ENCODE measurements at regions of chr15 and their contacts with region 1.

Region 1: DNA sequence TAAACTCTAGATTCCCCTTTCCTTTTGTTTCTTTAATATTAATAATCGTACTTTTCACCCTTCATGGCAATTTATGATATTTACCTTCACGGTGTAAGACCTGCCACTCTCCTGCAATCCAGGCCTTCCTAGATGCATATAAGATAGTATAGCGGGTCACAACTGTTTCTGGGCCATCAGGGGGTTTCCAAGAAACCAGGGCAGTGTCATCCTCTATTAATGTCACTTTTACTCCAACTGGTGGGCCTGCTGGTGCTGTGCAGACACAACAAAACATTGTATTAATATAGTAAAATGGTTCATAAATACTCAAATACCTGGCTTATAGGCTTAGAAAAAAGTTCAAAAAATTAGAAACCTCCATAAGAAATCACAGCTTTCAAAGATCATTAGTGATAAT is 48.9 kb upstream of the PYGO1 start:
- DNase-seq: no peak
- H3K4me3 ChIP-seq: no peak overlapping the region
- H3K27ac ChIP-seq: no peak overlapping the region
- H3K4me1 ChIP-seq: no peaks in the 10 kb centered on the region
- CTCF ChIP-seq: no peak

Region 2: DNA sequence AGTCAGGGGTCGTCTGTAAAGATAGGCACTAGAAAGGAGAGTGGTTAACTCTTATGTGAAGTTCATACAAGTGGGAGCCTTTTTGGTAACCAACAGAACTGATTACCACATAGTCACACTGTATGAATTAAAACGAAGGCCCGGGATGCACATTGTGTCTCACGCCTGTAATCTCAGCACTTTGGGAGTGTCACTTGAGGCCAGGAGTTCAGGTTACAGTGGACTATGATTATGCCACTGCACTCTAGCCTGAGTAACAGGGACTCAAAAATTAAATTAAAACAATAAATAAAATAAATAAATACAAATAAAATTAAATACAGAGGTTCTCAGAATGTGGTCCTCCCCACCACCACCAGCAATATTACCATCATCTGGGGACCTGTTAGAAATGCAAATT is 129.5 kb before region 1 on chr15:
- CTCF ChIA-PET with region 1: no interaction called
- POLR2A ChIA-PET with region 1: no interaction called
- intact Hi-C with region 1: no loop called
- DNase-seq: no peak
- H3K4me3 ChIP-seq: no peak overlapping the region
- H3K27ac ChIP-seq: no peak overlapping the region
- H3K4me1 ChIP-seq: no peaks in the 10 kb centered on the region
- CTCF ChIP-seq: no peak

Region 3: DNA sequence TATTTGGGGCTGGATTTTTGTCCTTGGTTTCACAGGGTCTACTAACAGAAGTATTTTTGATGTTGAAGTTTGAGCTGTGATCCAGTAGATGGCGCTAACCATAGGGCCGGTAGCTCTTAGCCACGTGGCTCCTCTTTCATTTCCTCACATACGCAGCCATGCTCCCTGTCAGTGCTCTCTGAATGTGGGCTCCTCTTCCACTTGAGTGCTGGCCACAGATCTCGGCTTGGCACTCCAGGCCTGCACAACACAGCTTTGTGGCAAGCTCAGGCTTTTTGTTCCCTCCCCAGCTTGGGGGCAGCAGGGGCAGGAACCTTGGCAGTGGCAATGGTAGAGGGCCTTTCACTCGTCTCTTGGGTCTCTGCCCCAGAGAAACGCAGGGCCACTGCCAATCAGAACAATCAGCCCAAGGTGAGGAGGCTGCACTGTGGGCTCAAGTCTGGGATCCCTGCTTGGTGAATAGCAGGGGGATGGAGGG is 110.5 kb before region 1 on chr15:
- CTCF ChIA-PET with region 1: no interaction called
- POLR2A ChIA-PET with region 1: no interaction called
- intact Hi-C with region 1: loop called (anchors 1 kb)
- DNase-seq: peak; percentile 75
- H3K4me3 ChIP-seq: no peak overlapping the region
- H3K27ac ChIP-seq: no peak overlapping the region
- H3K4me1 ChIP-seq: peaks cover 29% of the 10 kb centered on the region
- CTCF ChIP-seq: peak; percentile 86

Region 4: DNA sequence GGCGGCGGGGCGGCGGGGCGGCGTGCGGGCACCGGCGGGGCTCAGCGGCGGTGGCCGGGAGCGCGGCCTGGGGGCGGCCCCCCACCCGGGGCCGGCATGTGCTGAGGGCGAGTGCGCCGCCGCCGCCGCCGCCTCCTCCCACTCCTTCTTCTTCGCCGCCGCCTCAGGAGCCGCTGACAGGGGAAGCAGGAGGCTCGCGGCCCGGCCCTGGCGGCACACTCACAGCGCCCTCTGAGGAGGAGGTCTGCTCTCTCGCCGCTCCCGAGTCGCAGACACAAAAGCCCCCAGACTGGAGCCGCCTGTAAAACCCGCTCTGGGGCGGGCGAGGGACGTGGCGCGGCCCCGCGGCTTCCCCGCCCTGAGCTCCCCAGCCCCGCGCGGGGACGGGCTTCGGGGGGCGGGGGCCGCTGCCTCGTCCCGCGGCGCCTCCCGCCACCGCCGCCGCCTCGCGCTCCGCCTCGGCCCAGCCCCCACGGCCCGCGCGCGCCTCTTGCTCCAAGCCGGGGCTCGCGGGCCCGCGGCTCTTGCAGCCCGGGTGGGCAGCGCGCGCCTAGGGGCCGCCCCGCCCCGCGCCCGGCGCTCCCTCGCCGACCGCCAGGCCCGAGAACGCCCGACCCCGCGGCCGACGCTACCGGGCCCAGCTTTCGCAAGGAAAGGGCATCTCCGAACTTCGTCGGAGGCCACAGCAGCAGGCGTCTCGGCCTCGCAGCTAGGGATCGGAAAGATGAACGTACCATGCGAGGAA is 48.8 kb before region 1 on chr15 and contains the start of gene PYGO1:
- CTCF ChIA-PET with region 1: no interaction called
- POLR2A ChIA-PET with region 1: no interaction called
- intact Hi-C with region 1: loop called (anchors 2 kb)
- DNase-seq: no peak
- H3K4me3 ChIP-seq: no peak within 1 kb of the TSS
- H3K27ac ChIP-seq: no peak within 1 kb of the TSS
- H3K4me1 ChIP-seq: no peaks in the 10 kb centered on the region
- CTCF ChIP-seq: no peak
- total RNA-seq, gene PYGO1: not detected in 2 replicates

Region 5: GRCh38 chr15:55676507-55676906 is 39.4 kb after region 1 on chr15:
- CTCF ChIA-PET with region 1: no interaction called
- POLR2A ChIA-PET with region 1: no interaction called
- intact Hi-C with region 1: no loop called
- DNase-seq: no peak
- H3K4me3 ChIP-seq: no peak overlapping the region
- H3K27ac ChIP-seq: no peak overlapping the region
- H3K4me1 ChIP-seq: no peaks in the 10 kb centered on the region
- CTCF ChIP-seq: no peak